Dorsolateral prefrontal cortex (tissue), 120 donors: ENCODE measurements at regions of chr10 and their contacts with region 1.

Region 1: DNA sequence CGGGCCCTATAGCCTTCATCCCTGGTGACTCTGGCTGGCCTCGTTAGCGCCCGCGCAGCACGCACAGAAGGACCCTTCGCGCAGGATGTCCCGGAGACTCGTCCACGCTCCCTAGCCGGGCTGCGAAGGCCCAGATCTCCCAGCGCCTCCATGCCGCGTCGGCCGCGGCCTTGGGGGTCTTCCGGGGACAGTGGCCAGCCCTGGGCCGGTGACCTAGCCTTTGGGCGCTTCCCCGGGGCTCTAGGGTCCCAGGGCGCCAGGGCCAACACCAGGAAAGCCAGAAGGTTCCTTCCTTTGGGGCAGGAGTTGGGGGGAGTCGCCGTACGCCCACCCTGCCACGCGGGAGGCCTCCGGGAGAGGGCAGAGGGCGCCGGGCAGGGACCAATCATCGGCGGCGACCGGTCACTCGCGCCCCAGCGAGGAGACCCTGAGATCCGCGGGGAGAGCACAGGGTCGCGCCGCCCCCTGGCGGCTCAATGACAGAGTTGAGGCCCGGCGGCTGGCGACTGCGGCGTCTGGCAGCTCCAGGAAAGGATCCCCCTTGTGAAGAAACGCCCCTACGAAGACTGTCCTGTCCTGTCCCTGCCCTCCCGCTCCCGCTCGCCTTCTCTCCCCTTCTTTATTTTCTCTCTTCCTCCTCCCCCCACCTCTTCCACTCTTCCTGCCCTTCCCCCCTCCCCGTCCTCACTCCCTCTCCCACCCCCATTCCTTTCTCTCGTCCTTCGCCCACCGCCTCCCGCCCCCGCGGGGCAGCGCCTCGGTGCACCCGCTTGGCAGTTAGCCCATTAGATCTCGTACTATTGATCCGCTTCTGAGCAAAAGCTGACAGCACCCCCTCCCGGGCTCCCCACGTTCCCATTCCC is 62.3 kb upstream of the LBX1 start:
- DNase-seq: peak; percentile 40 to 81 (median 66)
- H3K4me3 ChIP-seq: peak overlapping the region; percentile 41 to 85 (median 70)
- H3K27ac ChIP-seq: peak overlapping the region in 56 of 59 donors; percentile 11 to 96 (median 88)
- H3K27me3 ChIP-seq: peaks cover 0 to 6% (median 0%) of the 10 kb centered on the region in 45 donors
- CTCF ChIP-seq: peak; percentile 25 to 78 (median 67)

Region 2: GRCh38 chr10:101214446-101215396 is 76.8 kb before region 1 on chr10:
- intact Hi-C with region 1: loop called in 1 of 2 experiments (anchors 5 kb)
- DNase-seq: peak in 9 of 10 donors; percentile 39 to 70 (median 49)
- H3K4me3 ChIP-seq: peak overlapping the region in 25 of 59 donors; percentile 5 to 52 (median 30)
- H3K27ac ChIP-seq: no peak overlapping the region
- H3K27me3 ChIP-seq: peaks cover 13 to 100% (median 89%) of the 10 kb centered on the region in 45 donors
- CTCF ChIP-seq: peak; percentile 69 to 97 (median 89)

Region 3: GRCh38 chr10:101228153-101228973 is 63.2 kb before region 1 on chr10:
- intact Hi-C with region 1: no loop called
- DNase-seq: no peak
- H3K4me3 ChIP-seq: peak overlapping the region in 12 of 59 donors; percentile 11 to 52 (median 36)
- H3K27ac ChIP-seq: no peak overlapping the region
- H3K27me3 ChIP-seq: peaks cover 51 to 100% (median 99%) of the 10 kb centered on the region in 45 donors
- CTCF ChIP-seq: no peak

Region 4: DNA sequence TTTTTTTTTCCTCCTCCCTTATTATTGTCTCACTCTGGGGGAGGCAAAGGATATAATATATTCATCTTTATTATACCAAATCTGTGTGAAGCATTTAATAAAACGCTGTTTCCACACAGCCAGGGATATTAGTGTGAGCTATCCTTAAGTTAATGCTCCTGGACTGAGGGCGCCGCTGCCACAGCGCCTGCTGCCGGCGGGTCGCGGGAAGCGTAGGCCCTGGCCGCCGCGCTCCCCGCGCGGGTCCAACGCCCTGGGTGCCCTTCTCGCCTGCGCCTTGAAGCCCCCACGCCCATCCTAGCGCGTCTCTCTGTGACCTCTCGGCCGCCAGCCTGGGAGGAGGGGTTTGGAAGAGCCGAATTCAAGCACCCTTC is 52.8 kb before region 1 on chr10:
- intact Hi-C with region 1: no loop called
- DNase-seq: no peak
- H3K4me3 ChIP-seq: no peak overlapping the region
- H3K27ac ChIP-seq: no peak overlapping the region
- H3K27me3 ChIP-seq: peaks cover 19 to 85% (median 64%) of the 10 kb centered on the region in 45 donors
- CTCF ChIP-seq: peak in 13 of 56 donors; percentile 9 to 33 (median 18)

Region 5: DNA sequence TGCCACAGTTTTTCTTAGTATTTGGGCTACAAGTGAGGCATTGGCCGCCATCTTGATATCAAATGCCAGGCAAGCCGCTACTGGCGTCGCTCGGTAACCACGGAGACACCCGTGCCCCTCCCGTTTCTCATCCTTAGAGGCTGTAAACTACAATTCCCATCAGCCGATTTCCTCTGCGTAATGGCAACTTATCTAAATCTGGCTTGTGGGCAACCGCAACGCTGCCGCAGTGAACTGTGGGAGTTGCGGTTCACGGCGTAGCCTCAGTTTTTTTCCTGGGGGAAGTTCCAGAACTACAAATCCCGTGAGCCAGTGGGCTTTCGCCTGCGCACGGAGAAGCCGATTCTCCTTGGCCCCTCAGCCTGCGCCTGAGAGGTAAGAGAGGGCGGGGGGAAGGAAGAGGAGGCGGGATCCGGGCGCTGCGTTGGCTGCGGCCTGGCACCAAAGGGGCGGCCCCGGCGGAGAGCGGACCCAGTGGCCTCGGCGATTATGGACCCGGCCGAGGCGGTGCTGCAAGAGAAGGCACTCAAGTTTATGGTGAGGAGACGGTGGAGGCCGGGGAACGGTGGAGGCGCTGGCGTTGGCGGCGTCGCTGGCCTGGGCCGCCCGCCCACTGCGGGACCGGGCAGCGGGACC is 62.2 kb after region 1 on chr10 and contains the start of gene BTRC:
- intact Hi-C with region 1: loop called in 1 of 2 experiments (anchors 5 kb)
- DNase-seq: peak; percentile 93 to 99 (median 98)
- H3K4me3 ChIP-seq: peak within 1 kb of the TSS; percentile 53 to 100 (median 92)
- H3K27ac ChIP-seq: peak within 1 kb of the TSS; percentile 51 to 97 (median 88)
- H3K27me3 ChIP-seq: no peaks in the 10 kb centered on the region
- CTCF ChIP-seq: peak in 24 of 56 donors; percentile 4 to 54 (median 26)
- total RNA-seq, gene BTRC: 37.4 to 117 (median 71.0) TPM

Region 6: GRCh38 chr10:101441541-101442455 is 150.2 kb after region 1 on chr10:
- intact Hi-C with region 1: loop called in 1 of 2 experiments (anchors 5 kb)
- DNase-seq: peak in 2 of 10 donors; percentile 34 to 44
- H3K4me3 ChIP-seq: no peak overlapping the region
- H3K27ac ChIP-seq: no peak overlapping the region
- H3K27me3 ChIP-seq: no peaks in the 10 kb centered on the region
- CTCF ChIP-seq: peak in 55 of 56 donors; percentile 42 to 80 (median 66)